ENCODE measurements at regions of chr10 and their contacts with region 1.

Region 1: DNA sequence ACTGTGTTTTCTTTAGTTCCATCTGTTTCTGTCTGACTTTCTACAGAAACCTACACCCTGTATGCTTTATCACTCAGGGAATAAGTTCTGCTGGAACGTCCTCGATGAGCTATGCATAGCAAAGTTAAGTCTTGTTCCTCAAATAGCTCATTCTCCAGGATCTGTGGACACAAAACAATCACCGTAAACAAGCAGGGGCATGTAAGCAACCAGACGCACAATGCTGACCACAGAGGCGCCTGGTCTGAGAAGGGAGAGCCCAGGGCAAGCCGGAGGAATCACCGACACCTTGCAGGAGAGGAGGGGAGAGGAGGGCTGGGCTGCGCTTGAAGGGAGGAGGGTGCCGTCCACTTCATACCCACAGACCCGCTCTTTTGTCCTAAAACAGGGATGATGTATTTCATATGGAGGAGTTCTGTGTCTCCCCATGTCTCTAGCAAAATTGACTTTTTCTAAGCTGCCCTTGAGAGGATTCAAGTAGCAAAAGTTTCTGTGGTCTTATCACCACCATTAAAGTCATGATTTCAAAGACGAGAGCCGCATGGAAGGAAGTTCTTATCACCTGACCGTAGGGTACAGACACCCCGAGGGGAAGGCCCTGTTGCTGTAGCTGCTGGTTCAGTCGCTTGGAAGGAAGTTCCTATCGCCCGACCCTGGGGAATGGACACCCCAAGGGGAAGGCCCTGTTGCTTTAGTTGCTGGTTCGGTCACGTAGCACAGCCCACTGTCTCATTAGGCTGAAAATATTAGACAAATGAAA is 14.3 kb downstream of the CALML3 start:
- DNase-seq: no peak
- ATAC-seq: no peak; the same call in 1 of the 2 replicates
- H3K4me3 ChIP-seq: no peak overlapping the region
- H3K27ac ChIP-seq: no peak overlapping the region
- H3K4me1 ChIP-seq: peaks cover 6% of the 10 kb centered on the region
- H3K27me3 ChIP-seq: no peaks in the 10 kb centered on the region
- CTCF ChIP-seq: no peak

Region 2: GRCh38 chr10:5460468-5461202 is 78.4 kb before region 1 on chr10:
- CTCF ChIA-PET with region 1: no interaction called
- POLR2A ChIA-PET with region 1: interaction called, 33 read pairs
- intact Hi-C with region 1: no loop called
- DNase-seq: no peak
- ATAC-seq: peak; percentile 8
- H3K4me3 ChIP-seq: no peak overlapping the region
- H3K27ac ChIP-seq: no peak overlapping the region
- H3K4me1 ChIP-seq: peaks cover 6% of the 10 kb centered on the region
- H3K27me3 ChIP-seq: no peaks in the 10 kb centered on the region
- CTCF ChIP-seq: no peak

Measured in PC-3 (cell line).